HCT116 (cell line): ENCODE measurements at regions of chr5 and their contacts with region 1.

Region 1: DNA sequence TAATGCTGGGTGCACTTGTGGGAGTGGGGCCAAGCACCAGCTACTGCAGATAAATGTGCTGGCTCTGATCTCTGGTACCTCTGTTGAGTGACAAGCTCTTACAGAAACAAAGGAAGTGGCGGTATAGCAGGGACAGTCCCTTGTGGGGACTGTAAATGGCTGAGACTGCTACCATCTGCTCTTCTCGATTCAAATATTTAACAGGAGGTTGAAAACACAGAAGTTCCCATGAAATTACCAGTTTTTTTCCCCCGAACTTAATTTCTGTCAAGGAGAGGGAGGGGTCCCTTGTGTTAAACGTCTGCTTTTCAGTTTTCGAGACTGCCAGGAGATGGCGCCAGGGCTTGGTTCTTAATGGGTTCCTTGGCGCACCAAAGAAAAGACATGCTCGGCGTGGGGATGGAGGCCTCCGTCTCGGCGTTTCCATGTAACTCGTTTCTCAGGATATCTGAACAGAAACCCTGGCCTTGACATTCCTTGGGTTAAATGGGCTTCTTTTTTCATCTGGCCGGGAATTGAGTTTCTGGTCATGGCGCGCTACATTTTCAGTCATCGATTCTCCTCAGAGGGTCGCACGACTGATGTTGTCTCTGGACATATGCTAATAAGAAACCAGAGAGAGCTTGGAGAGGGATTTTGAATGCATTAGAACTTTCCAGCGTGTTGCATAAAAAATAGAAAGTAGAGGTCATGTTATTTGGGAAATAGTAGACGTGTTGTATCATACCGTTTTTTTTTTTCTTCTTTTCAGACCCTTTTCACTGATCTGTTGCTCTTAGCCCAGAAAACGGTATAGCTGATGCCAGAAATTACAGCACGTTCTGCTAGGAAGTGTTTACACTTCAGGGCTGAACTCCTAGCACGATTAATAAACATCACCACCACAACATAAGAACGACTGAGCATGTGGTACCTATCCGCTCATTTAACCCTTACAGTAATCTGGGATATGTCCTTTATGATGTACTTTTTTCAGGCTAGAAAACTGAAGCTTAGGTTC is 64.0 kb downstream of the CARTPT start:
- DNase-seq: peak; percentile 59
- ATAC-seq: peak; percentile 89
- H3K4me3 ChIP-seq: no peak overlapping the region
- H3K27ac ChIP-seq: no peak overlapping the region
- H3K4me1 ChIP-seq: peaks cover 0 to 9% of the 10 kb centered on the region in 2 experiments; a peak in 2 of 4 replicates
- H3K27me3 ChIP-seq: no peaks in the 10 kb centered on the region
- CTCF ChIP-seq: peak; percentile 79 to 91 (median 87); a peak in 5 of 6 replicates
- POLR2A ChIP-seq: no peak
- RAD21 ChIP-seq: peak; percentile 93

Region 2: DNA sequence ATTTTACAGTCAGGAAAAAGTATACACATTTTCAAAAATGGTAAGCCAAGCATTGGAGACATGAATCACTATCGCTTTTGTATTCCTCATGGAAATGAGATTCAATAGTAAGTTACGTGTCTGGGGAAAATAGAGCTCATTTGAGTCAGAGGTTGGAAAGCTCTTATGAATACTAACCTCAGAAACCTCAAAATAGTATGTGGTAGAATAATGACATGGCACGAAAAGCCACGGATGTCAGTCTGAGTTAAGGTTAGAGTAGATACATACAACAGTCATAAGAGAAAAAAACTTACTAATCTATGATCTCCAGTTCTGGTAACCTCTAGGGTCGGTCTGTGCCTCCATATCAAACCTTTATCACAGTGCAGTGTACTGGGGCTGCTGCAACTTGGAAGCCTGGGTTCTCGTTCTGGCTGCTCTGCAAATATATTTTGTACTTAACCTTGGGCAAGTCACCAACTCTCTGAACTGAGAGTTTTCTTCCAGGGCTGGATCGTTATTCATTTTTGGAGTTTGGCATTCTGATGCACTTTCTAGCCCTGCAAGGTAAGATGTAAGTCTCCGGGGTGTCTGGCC is 356.0 kb after region 1 on chr5:
- CTCF ChIA-PET with region 1: interaction called, 3 read pairs
- POLR2A ChIA-PET with region 1: no interaction called
- RAD21 ChIA-PET with region 1: no interaction called
- intact Hi-C with region 1: loop called (anchors 1 kb)
- DNase-seq: no peak
- ATAC-seq: no peak
- H3K4me3 ChIP-seq: no peak overlapping the region
- H3K27ac ChIP-seq: no peak overlapping the region
- H3K4me1 ChIP-seq: peaks cover 0 to 12% of the 10 kb centered on the region in 2 experiments; a peak in 1 of 4 replicates
- H3K27me3 ChIP-seq: no peaks in the 10 kb centered on the region
- CTCF ChIP-seq: no peak
- POLR2A ChIP-seq: no peak
- RAD21 ChIP-seq: no peak

Region 3: DNA sequence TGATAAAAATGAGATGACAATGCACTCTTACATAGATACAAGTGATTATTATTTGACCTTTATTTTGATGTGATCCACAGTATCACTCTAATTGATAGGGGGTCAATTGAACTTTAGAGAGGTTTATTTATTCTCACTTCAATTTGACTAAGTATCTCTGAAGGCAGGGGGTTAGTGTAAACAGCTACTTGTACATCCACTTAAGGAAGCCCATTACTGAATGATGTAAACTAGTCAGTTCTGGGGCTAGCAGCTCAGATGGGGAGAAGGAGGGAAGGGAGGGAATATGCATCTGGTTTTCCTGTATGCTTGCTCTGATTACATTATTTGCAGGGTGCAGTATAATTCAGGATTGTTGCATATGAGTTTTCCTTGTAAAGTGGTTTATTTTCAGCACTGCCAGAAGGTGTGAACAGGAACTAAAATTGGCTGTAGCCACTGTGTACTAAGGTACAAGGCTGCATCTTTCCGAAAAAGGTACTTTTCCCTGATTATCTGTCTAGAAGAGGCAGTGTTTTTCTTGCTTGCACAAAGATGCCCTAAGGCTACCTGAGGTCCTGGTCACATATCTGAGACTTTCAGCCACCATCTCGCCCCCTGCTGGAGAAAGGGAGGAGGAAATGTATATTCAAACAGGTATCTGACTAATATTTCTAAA is 485.8 kb after region 1 on chr5:
- CTCF ChIA-PET with region 1: no interaction called
- POLR2A ChIA-PET with region 1: no interaction called
- RAD21 ChIA-PET with region 1: no interaction called
- intact Hi-C with region 1: loop called (anchors 1 kb)
- DNase-seq: peak; percentile 44
- ATAC-seq: peak; percentile 70
- H3K4me3 ChIP-seq: no peak overlapping the region
- H3K27ac ChIP-seq: no peak overlapping the region
- H3K4me1 ChIP-seq: no peaks in the 10 kb centered on the region
- H3K27me3 ChIP-seq: no peaks in the 10 kb centered on the region
- CTCF ChIP-seq: peak; percentile 56 to 90 (median 75); a peak in 5 of 6 replicates
- POLR2A ChIP-seq: no peak
- RAD21 ChIP-seq: peak; percentile 70

Region 4: GRCh38 chr5:72307968-72308852 is 525.1 kb after region 1 on chr5:
- CTCF ChIA-PET with region 1: interaction called, 19 read pairs
- POLR2A ChIA-PET with region 1: interaction called, 5 read pairs
- RAD21 ChIA-PET with region 1: interaction called in 1 of 2 experiments, 3 read pairs
- intact Hi-C with region 1: loop called (anchors 1 kb)
- DNase-seq: peak; percentile 94
- ATAC-seq: peak; percentile 97
- H3K4me3 ChIP-seq: peak overlapping the region; percentile 84 to 90
- H3K27ac ChIP-seq: peak overlapping the region; percentile 76
- H3K4me1 ChIP-seq: peaks cover 4 to 11% of the 10 kb centered on the region in 2 experiments
- H3K27me3 ChIP-seq: no peaks in the 10 kb centered on the region
- CTCF ChIP-seq: peak; percentile 80 to 81 (median 80)
- POLR2A ChIP-seq: peak; percentile 92
- RAD21 ChIP-seq: peak; percentile 87

Region 5: GRCh38 chr5:72523960-72524582 is 741.0 kb after region 1 on chr5:
- CTCF ChIA-PET with region 1: interaction called, 3 read pairs
- POLR2A ChIA-PET with region 1: no interaction called
- RAD21 ChIA-PET with region 1: no interaction called
- intact Hi-C with region 1: loop called (anchors 2 kb)
- DNase-seq: peak; percentile 67
- ATAC-seq: peak; percentile 82
- H3K4me3 ChIP-seq: no peak overlapping the region
- H3K27ac ChIP-seq: no peak overlapping the region
- H3K4me1 ChIP-seq: no peaks in the 10 kb centered on the region
- H3K27me3 ChIP-seq: no peaks in the 10 kb centered on the region
- CTCF ChIP-seq: peak; percentile 44 to 71 (median 61); a peak in 5 of 6 replicates
- POLR2A ChIP-seq: no peak
- RAD21 ChIP-seq: peak; percentile 87